ENCODE measurements at regions of chr3 and their contacts with region 1.

Region 1: GRCh38 chr3:99753268-99753975 is 64.2 kb upstream of the CMSS1 start:
- DNase-seq: peak; percentile 31
- CTCF ChIP-seq: peak; percentile 72

Region 2: GRCh38 chr3:99023590-99024192 is 729.7 kb before region 1 on chr3:
- in situ Hi-C with region 1: loop called (anchors 25 kb)
- DNase-seq: peak; percentile 21
- CTCF ChIP-seq: peak; percentile 66

Region 3: GRCh38 chr3:99475229-99475628 is 278.2 kb before region 1 on chr3:
- in situ Hi-C with region 1: no loop called
- DNase-seq: no peak
- CTCF ChIP-seq: no peak